ENCODE measurements at regions of chr7 and their contacts with region 1.

Region 1: GRCh38 chr7:16564909-16565426 is 38.3 kb downstream of the LRRC72 start:
- DNase-seq: peak; percentile 34
- H3K4me3 Mint-ChIP-seq: no peak overlapping the region
- H3K27ac Mint-ChIP-seq: no peak overlapping the region
- H3K4me1 Mint-ChIP-seq: peaks cover 13% of the 10 kb centered on the region
- H3K27me3 Mint-ChIP-seq: no peaks in the 10 kb centered on the region
- CTCF ChIP-seq: peak; percentile 66

Region 2: GRCh38 chr7:15720849-15721471 is 844.0 kb before region 1 on chr7:
- CTCF ChIA-PET with region 1: no interaction called
- intact Hi-C with region 1: no loop called
- DNase-seq: peak; percentile 62
- H3K4me3 Mint-ChIP-seq: no peak overlapping the region
- H3K27ac Mint-ChIP-seq: no peak overlapping the region
- H3K4me1 Mint-ChIP-seq: peaks cover 22% of the 10 kb centered on the region
- H3K27me3 Mint-ChIP-seq: no peaks in the 10 kb centered on the region
- CTCF ChIP-seq: peak; percentile 85

Region 3: DNA sequence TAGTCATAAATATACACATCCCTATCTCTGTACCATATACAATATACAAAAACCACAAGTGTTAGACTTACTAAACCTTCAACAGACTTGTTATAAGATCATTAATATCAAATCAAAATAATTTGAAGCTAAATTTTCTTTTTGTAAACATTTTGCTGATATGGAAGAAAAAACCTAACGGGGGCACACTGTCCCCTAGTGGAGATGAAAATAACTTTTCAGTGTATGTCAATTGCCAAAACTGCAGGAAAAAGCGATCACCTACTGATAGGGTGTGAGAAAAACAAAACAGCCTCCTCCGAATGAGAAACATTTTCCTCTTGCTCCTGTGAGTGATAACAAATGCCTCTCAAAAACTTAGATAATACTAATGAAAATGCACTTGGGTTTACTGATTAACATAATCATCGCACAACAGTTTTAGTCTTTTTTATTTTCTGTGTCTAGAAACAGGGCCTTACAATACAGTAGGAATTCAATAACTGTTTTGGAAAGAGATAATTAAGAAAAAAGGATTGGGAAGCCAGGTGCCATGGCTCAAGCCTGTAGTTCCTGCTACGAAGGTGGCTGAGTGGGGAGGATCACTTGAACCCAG is 466.3 kb before region 1 on chr7:
- CTCF ChIA-PET with region 1: interaction called, 19 read pairs
- intact Hi-C with region 1: loop called (anchors 5 kb)
- DNase-seq: peak; percentile 63
- H3K4me3 Mint-ChIP-seq: no peak overlapping the region
- H3K27ac Mint-ChIP-seq: no peak overlapping the region
- H3K4me1 Mint-ChIP-seq: peaks cover 14% of the 10 kb centered on the region
- H3K27me3 Mint-ChIP-seq: no peaks in the 10 kb centered on the region
- CTCF ChIP-seq: peak; percentile 93

Region 4: GRCh38 chr7:16295558-16295957 is 269.4 kb before region 1 on chr7:
- CTCF ChIA-PET with region 1: interaction called, 3 read pairs
- intact Hi-C with region 1: loop called (anchors 5 kb)
- DNase-seq: no peak
- H3K4me3 Mint-ChIP-seq: no peak overlapping the region
- H3K27ac Mint-ChIP-seq: no peak overlapping the region
- H3K4me1 Mint-ChIP-seq: peaks cover 44% of the 10 kb centered on the region
- H3K27me3 Mint-ChIP-seq: no peaks in the 10 kb centered on the region
- CTCF ChIP-seq: no peak

Region 5: DNA sequence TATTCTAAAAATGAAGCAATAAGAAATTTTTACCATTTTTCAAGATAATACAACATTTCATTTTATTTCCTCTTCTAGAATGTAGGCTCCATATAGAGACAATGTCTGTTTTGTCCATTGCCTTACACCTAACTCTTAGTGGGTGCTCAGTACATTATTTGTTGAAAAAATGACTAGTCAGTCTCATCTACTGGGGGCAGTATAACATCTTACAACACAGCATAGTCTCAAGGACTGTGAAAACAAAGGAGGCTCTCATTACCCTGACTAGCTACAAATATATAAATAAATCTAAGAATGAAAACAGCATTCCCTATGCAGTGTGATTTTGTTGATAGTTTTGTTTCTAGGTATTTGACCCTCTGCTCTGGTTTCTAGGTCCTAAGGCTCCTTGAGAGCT is 155.2 kb before region 1 on chr7:
- CTCF ChIA-PET with region 1: interaction called, 13 read pairs
- intact Hi-C with region 1: no loop called
- DNase-seq: no peak
- H3K4me3 Mint-ChIP-seq: no peak overlapping the region
- H3K27ac Mint-ChIP-seq: no peak overlapping the region
- H3K4me1 Mint-ChIP-seq: peaks cover 42% of the 10 kb centered on the region
- H3K27me3 Mint-ChIP-seq: no peaks in the 10 kb centered on the region
- CTCF ChIP-seq: no peak

Region 6: GRCh38 chr7:16431646-16432424 is 133.1 kb before region 1 on chr7:
- CTCF ChIA-PET with region 1: interaction called, 22 read pairs
- intact Hi-C with region 1: loop called (anchors 1 kb)
- DNase-seq: peak; percentile 55
- H3K4me3 Mint-ChIP-seq: no peak overlapping the region
- H3K27ac Mint-ChIP-seq: no peak overlapping the region
- H3K4me1 Mint-ChIP-seq: peaks cover 51% of the 10 kb centered on the region
- H3K27me3 Mint-ChIP-seq: no peaks in the 10 kb centered on the region
- CTCF ChIP-seq: no peak

Region 7: DNA sequence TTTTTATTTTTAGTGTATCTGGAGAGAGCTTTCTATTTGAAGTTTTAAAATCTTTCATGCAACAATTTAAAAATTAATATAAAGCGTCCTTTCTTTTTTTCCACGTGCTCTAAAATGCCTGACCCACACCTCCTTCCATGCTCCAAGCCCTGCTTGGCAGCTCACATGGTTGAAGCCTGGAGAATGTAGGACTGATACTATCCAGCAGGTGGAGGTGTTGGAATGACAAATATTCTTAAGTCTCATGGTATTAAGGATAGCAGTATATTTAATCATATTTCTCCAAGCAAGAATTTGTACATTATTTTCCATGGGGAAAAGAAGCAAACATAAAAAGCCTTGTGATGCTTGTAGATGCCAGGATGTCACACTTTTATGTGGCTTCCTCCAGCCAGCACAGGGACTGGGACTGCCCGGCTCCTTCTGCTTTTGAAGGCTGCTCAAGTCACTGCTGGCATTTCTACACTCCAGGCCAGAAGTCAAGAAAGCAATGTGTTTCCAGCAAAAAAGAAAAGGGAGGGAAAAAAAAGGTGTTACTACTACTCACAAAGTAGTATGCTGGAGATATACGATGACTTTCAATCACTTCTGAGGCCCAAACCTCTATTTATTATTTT is 130.8 kb after region 1 on chr7:
- CTCF ChIA-PET with region 1: no interaction called
- intact Hi-C with region 1: no loop called
- DNase-seq: peak; percentile 71
- H3K4me3 Mint-ChIP-seq: no peak overlapping the region
- H3K27ac Mint-ChIP-seq: no peak overlapping the region
- H3K4me1 Mint-ChIP-seq: peaks cover 7% of the 10 kb centered on the region
- H3K27me3 Mint-ChIP-seq: no peaks in the 10 kb centered on the region
- CTCF ChIP-seq: peak; percentile 83